ENCODE measurements at regions of chr12 and their contacts with region 1.

Region 1: GRCh38 chr12:111024205-111024801 is 103.9 kb upstream of the MYL2 start:
- ATAC-seq: peak; percentile 86 to 99 (median 94)
- H3K4me3 ChIP-seq: no peak overlapping the region
- H3K27ac ChIP-seq: no peak overlapping the region
- H3K4me1 ChIP-seq: no peaks in the 10 kb centered on the region

Region 2: GRCh38 chr12:111298582-111299436 is 274.5 kb after region 1 on chr12:
- in situ Hi-C with region 1: loop called in 6 of 9 experiments (anchors 10 to 25 kb)
- ATAC-seq: peak; percentile 66 to 98 (median 82)
- H3K4me3 ChIP-seq: no peak overlapping the region
- H3K27ac ChIP-seq: no peak overlapping the region
- H3K4me1 ChIP-seq: peaks cover 0 to 6% of the 10 kb centered on the region in 2 donors

Measured in motor neuron (in vitro differentiated cells).